ENCODE measurements at regions of chr17 and their contacts with region 1.

Region 1: DNA sequence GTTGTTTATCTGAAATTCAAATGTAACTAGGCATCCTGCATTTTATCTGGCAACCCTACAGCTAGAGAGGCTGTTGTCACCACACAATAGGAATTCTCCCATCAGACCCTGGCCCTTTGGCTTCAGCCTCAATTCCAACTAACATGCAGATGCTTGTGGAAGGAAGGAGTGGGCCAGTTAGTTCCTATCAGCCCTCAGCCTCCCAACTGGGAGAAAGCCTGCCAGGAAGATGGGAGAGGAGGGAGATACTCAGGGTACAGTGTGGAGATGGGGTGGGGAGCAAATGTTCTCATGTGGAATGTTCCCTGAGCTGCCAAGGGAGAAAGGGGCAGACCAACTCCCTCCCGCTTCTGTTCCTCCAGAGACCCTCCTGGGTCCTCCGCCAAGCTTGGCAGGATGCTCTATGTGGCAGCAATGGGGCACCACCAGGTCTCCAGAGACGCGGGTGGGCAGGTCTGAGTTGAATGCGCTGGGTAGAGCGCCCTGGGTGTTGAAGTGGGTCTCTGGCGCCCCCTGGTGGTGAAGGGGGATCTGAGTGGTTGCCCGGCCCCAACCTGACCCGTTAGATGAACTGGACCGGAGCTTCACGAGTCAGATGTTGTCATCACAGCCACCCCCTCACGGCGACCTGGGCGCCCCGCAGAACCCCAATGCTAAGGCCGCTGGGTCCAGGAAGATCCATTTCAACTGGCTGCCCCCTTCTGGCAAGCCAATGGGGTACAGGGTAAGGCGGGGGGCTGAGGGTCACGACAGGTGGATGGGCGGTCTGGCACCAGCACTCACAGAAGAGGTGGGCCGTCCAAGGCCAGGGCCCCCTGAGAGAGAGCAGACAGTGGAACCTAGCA is 15.2 kb downstream of the GALK1 start:
- DNase-seq: peak; percentile 83 to 93 (median 84)
- ATAC-seq: peak; percentile 63 to 83 (median 70)
- H3K4me3 ChIP-seq: peak overlapping the region in 1 of 12 donors; percentile 5
- H3K27ac ChIP-seq: no peak overlapping the region
- H3K4me1 ChIP-seq: peaks cover 0 to 36% (median 21%) of the 10 kb centered on the region in 12 donors
- H3K27me3 ChIP-seq: no peaks in the 10 kb centered on the region
- CTCF ChIP-seq: peak; percentile 88 to 99 (median 95)
- POLR2A ChIP-seq: no peak

Region 2: DNA sequence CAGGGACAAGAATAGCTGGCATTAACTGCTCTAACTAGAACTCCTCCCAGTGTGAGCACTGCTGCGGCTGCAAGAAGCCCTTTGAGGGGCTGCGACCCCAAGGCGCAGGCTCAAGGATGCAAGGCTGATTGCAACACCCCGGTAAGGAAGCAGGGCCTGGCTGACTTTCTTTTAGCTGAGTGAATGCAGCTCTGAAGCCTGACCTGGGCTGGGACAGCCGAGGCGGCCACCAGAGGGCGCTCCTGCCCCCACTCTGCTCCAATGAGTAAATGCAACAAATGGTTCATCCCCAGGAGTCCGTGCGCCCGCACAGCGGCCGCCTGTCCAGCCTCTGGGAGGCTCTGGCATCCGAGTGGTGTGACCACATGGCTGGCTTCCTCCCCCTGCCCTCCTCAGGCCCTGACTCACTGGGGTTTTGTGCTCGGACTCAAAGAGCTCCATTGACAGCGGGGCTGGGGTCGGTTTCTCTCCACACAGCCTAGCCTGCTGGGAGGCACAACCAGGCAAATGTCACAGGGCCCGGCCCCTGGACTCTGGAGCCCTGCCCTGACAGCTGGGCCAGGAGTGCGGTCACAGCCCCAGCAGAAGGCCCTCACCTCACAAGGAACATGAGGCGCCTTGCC is 116.8 kb before region 1 on chr17 and contains the start of gene SMIM5:
- intact Hi-C with region 1: loop called (anchors 1 to 5 kb)
- DNase-seq: peak; percentile 86 to 93 (median 90)
- ATAC-seq: peak; percentile 52 to 77 (median 68)
- H3K4me3 ChIP-seq: peak within 1 kb of the TSS in 10 of 12 donors; percentile 5 to 39 (median 26)
- H3K27ac ChIP-seq: peak within 1 kb of the TSS; percentile 58 to 95 (median 85)
- H3K4me1 ChIP-seq: peaks cover 13 to 58% (median 25%) of the 10 kb centered on the region in 12 donors
- H3K27me3 ChIP-seq: no peaks in the 10 kb centered on the region
- CTCF ChIP-seq: peak; percentile 93 to 100 (median 98)
- POLR2A ChIP-seq: no peak
- total RNA-seq, gene SMIM5: 1.8 to 18.2 (median 6.8) TPM

Region 3: GRCh38 chr17:75673487-75673886 is 76.3 kb before region 1 on chr17:
- intact Hi-C with region 1: loop called in 8 of 10 experiments (anchors 1 to 5 kb)
- DNase-seq: no peak
- ATAC-seq: no peak
- H3K4me3 ChIP-seq: no peak overlapping the region
- H3K27ac ChIP-seq: no peak overlapping the region
- H3K4me1 ChIP-seq: peaks cover 0 to 22% (median 9%) of the 10 kb centered on the region in 12 donors
- H3K27me3 ChIP-seq: no peaks in the 10 kb centered on the region
- CTCF ChIP-seq: no peak
- POLR2A ChIP-seq: no peak

Region 4: GRCh38 chr17:75679706-75680442 is 69.9 kb before region 1 on chr17:
- intact Hi-C with region 1: loop called in 9 of 10 experiments (anchors 1 to 5 kb)
- DNase-seq: peak in 3 of 5 donors; percentile 42 to 50 (median 50)
- ATAC-seq: peak in 3 of 4 donors; percentile 69 to 86 (median 84)
- H3K4me3 ChIP-seq: no peak overlapping the region
- H3K27ac ChIP-seq: peak overlapping the region; percentile 16 to 74 (median 64)
- H3K4me1 ChIP-seq: peaks cover 0 to 46% (median 33%) of the 10 kb centered on the region in 12 donors
- H3K27me3 ChIP-seq: no peaks in the 10 kb centered on the region
- CTCF ChIP-seq: peak in 10 of 12 donors; percentile 15 to 55 (median 38)
- POLR2A ChIP-seq: no peak

Measured in heart left ventricle (tissue), 16 donors.